ENCODE measurements at regions of chr2 and their contacts with region 1.

Region 1: DNA sequence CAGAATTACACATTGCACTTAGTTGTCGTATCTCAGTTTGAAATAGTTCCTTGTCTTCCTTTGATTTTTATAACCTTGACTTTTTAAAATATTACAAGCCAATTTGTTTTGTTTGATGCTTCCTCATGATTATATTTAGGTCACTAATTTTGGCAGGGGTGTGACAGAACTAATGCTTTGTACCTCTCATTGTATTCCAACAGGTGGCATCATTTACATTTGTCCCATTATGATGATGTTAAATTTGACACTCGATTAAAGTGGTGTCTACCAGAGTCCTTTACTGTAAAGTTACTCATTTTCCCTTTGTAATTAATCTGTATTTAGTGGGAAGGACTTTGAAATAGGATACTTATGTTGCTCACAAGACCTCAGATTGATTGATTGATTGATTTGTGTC is 21.5 kb upstream of the MFSD2B start:
- DNase-seq: no peak
- H3K4me3 ChIP-seq: no peak overlapping the region
- H3K27ac ChIP-seq: no peak overlapping the region
- H3K4me1 ChIP-seq: no peaks in the 10 kb centered on the region
- H3K27me3 ChIP-seq: no peaks in the 10 kb centered on the region
- CTCF ChIP-seq: peak; percentile 73

Region 2: DNA sequence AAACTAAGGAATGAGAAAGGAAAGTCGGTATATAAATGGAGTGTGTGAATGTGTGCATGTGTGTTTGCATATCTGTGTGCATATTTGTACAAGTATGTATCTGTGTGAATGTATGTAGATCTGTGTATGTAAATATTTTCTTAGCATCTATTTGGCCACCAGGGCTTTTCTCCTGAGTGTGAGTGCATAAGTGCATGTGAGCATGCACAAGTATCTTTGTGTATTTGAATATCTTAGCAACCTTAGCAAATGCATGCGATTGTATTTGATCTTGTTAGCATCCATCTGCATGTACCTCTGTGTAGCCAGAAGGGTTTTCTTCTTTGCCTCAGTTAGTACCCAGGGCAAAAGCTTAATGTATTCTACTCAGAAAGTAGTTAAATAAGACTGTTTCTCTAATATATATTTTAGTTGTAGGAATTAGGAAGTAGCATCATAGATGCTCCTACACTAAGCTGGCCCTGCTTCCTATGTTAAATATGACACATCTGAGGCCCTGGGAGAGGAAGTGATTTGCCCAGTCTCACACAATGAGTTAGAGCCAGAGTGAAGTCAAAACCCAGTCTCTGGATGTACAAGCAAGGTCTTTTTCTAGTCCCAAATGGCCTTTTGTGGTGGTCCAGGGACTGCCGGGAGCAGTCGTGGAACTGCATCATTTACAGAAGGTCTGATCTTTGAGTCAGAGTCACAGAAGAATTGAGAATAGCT is 70.3 kb after region 1 on chr2:
- CTCF ChIA-PET with region 1: no interaction called
- POLR2A ChIA-PET with region 1: no interaction called
- intact Hi-C with region 1: loop called (anchors 1 kb)
- DNase-seq: no peak
- H3K4me3 ChIP-seq: no peak overlapping the region
- H3K27ac ChIP-seq: no peak overlapping the region
- H3K4me1 ChIP-seq: no peaks in the 10 kb centered on the region
- H3K27me3 ChIP-seq: no peaks in the 10 kb centered on the region
- CTCF ChIP-seq: no peak

Region 3: GRCh38 chr2:24863641-24864040 is 875.3 kb after region 1 on chr2:
- CTCF ChIA-PET with region 1: no interaction called
- POLR2A ChIA-PET with region 1: no interaction called
- intact Hi-C with region 1: no loop called
- DNase-seq: no peak
- H3K4me3 ChIP-seq: no peak overlapping the region
- H3K27ac ChIP-seq: no peak overlapping the region
- H3K4me1 ChIP-seq: no peaks in the 10 kb centered on the region
- H3K27me3 ChIP-seq: no peaks in the 10 kb centered on the region
- CTCF ChIP-seq: no peak